Natural killer cell (primary cell): ENCODE measurements at regions of chr4 and their contacts with region 1.

Region 1: GRCh38 chr4:1346781-1347409 is at the start of gene UVSSA:
- DNase-seq: peak; percentile 100
- ATAC-seq: peak; percentile 90 to 98 (median 91)
- H3K4me3 ChIP-seq: peak within 1 kb of the TSS; percentile 79
- H3K4me3 Mint-ChIP-seq: peak within 1 kb of the TSS; percentile 90
- H3K27ac ChIP-seq: peak within 1 kb of the TSS; percentile 91
- H3K27ac Mint-ChIP-seq: peak within 1 kb of the TSS; percentile 89 to 91
- H3K4me1 ChIP-seq: peaks cover 31% of the 10 kb centered on the region
- H3K4me1 Mint-ChIP-seq: peaks cover 40 to 41% of the 10 kb centered on the region in 2 donors
- H3K27me3 ChIP-seq: no peaks in the 10 kb centered on the region
- H3K27me3 Mint-ChIP-seq: no peaks in the 10 kb centered on the region
- CTCF ChIP-seq: no peak
- total RNA-seq, gene UVSSA: 48.0 to 59.4 (median 56.4) TPM

Region 2: DNA sequence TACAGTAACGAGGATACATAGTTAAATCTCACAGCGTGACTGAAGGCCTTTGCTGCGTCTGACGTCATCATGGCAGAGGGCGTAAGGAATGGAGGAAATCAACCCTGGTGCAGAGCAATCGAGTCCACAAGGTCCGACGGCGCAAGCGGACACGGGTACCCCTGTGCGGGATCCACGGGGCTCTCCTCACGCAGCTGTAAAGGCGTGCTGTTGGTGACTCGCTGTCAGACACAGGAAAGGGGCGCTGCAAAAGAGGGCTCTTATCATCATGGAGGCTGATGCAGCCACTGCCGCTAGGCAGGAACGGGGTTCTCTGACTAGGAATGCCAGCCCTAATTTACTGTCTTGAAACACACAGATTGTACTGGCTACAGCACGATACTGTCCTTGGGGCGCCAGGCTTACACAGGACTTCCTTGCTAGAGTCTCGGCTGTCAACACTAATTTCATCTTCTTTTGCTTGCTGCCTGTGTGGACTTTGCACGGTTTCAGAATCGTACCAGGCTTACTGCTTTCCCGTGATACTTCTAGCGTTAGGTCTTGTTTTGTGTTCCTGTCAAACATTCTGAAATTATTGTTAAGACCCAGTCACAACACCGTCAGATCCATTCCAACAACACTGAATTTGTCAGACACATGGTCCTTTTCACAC is 247.1 kb before region 1 on chr4:
- intact Hi-C with region 1: no loop called
- DNase-seq: no peak
- ATAC-seq: no peak
- H3K4me3 ChIP-seq: no peak overlapping the region
- H3K4me3 Mint-ChIP-seq: no peak overlapping the region
- H3K27ac ChIP-seq: no peak overlapping the region
- H3K27ac Mint-ChIP-seq: no peak overlapping the region
- H3K4me1 ChIP-seq: no peaks in the 10 kb centered on the region
- H3K4me1 Mint-ChIP-seq: no peaks in the 10 kb centered on the region
- H3K27me3 ChIP-seq: no peaks in the 10 kb centered on the region
- H3K27me3 Mint-ChIP-seq: peaks cover 0 to 3% of the 10 kb centered on the region in 2 donors
- CTCF ChIP-seq: no peak

Region 3: GRCh38 chr4:1289207-1290164 is 57.4 kb before region 1 on chr4 and contains the start of gene MAEA:
- intact Hi-C with region 1: loop called (anchors 5 kb)
- DNase-seq: peak; percentile 97 to 98
- ATAC-seq: peak; percentile 94 to 99 (median 97)
- H3K4me3 ChIP-seq: peak within 1 kb of the TSS; percentile 65
- H3K4me3 Mint-ChIP-seq: peak within 1 kb of the TSS; percentile 95
- H3K27ac ChIP-seq: peak within 1 kb of the TSS; percentile 87
- H3K27ac Mint-ChIP-seq: peak within 1 kb of the TSS; percentile 87 to 90
- H3K4me1 ChIP-seq: peaks cover 38% of the 10 kb centered on the region
- H3K4me1 Mint-ChIP-seq: peaks cover 24 to 38% of the 10 kb centered on the region in 2 donors
- H3K27me3 ChIP-seq: no peaks in the 10 kb centered on the region
- H3K27me3 Mint-ChIP-seq: no peaks in the 10 kb centered on the region
- CTCF ChIP-seq: no peak
- total RNA-seq, gene MAEA: 63.5 to 89.2 (median 64.0) TPM

Region 4: DNA sequence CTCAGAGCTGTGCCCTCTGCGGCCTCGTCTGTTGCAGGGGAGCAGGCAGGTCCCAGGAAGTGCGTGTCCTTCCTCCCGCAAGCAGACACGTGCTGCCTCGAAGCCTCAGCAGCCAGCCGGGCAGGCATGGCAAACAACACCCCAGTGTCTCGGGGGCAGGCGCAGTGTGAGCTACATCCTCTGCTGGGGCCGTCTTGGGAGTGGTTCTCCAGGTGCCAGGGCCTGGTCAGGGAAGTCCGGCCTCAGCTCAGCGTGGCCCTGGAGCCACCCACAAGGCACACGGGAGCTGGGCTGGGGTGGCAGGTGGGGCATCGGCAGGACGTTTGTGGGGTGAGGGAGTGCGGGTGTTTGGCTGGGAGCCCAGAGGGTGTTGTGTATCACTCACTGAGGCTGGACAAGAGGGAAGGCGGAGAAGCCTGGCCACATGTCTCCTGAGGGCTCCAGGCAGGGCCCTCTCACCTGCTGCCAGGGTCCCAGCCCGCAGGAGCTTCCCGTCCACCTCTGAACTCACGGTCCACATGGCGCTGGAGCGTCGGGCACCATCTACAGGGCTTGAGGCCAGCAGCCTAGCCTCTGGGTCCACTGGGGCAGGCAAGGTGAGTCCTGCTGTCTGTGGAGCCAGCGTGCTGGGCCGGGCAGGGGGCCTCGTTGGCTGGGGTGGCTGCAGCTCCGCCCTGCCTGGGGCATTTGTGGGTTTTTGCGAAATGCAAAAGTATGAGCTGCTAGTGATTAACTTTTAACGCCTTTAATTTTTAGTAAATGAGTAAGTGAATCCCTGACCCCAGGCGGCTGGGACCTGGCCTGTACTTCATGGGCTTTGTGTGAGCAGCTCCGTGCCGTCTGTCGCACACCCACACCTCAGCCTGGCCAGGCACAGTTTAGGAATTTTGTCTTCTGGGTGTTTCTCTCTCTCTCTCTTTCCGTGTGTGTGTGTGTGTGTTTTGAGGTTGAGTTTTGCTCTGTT is 17.2 kb before region 1 on chr4:
- intact Hi-C with region 1: loop called (anchors 2 kb)
- DNase-seq: peak in 1 of 2 donors; percentile 71
- ATAC-seq: peak; percentile 15 to 45 (median 32)
- H3K4me3 ChIP-seq: no peak overlapping the region
- H3K4me3 Mint-ChIP-seq: peak overlapping the region; percentile 61
- H3K27ac ChIP-seq: peak overlapping the region; percentile 79
- H3K27ac Mint-ChIP-seq: peak overlapping the region; percentile 64 to 96
- H3K4me1 ChIP-seq: peaks cover 43% of the 10 kb centered on the region
- H3K4me1 Mint-ChIP-seq: peaks cover 24 to 37% of the 10 kb centered on the region in 2 donors
- H3K27me3 ChIP-seq: no peaks in the 10 kb centered on the region
- H3K27me3 Mint-ChIP-seq: no peaks in the 10 kb centered on the region
- CTCF ChIP-seq: no peak